ENCODE measurements at regions of chr2 and their contacts with region 1.

Region 1: DNA sequence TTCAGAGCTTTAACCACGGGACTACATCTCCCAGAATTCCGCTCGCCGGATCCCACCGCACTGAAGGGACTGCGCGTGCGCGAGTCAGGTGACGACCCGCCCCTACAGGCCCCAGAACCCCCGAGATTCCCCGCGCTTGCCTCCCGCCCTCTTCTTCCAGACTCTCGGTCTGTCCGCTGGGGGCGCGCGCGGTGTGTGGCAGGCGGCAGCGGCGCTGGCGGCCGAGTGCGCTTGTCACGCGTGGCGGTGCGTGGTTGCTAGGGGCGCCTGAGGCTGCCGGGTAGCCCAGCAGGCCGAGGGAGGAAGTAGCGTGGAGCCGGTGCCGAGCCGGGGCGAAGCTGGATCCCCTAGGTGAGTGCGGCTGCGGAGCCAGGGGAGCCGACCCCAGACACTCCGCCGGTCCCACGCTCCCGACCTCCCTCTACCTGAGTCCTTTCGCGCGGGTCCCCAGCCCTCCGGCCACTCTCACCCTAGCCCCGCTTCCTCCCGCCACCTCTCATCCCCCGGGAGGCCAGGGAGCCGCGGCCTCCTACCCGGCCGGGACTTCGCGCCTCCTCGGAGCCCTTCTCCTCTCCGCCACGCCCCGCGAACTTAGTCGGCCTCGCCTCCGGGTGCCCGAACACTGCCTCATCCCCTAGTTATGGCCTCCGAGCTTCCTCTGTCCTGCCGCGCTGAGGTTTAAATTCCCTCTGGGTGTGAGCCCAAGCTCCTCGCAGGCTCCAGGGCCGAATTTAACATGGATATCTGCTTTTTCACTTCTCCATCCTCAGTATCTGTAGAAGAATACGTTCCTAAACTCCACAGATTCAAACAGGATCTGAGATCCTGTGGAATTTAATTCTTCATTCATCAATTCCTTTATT is at the start of gene TTLL4:
- H3K4me3 Mint-ChIP-seq: peak within 1 kb of the TSS; percentile 84
- H3K27ac Mint-ChIP-seq: peak within 1 kb of the TSS; percentile 93
- H3K4me1 Mint-ChIP-seq: peaks cover 18% of the 10 kb centered on the region
- H3K27me3 Mint-ChIP-seq: peaks cover 4% of the 10 kb centered on the region

Region 2: GRCh38 chr2:218659258-218659987 is 51.5 kb before region 1 on chr2 and contains the starts of genes BCS1L and ZNF142:
- intact Hi-C with region 1: loop called (anchors 1 kb)
- H3K4me3 Mint-ChIP-seq: peak within 1 kb of the TSS; percentile 98
- H3K27ac Mint-ChIP-seq: peak within 1 kb of the TSS; percentile 82
- H3K4me1 Mint-ChIP-seq: peaks cover 31% of the 10 kb centered on the region
- H3K27me3 Mint-ChIP-seq: no peaks in the 10 kb centered on the region

Region 3: DNA sequence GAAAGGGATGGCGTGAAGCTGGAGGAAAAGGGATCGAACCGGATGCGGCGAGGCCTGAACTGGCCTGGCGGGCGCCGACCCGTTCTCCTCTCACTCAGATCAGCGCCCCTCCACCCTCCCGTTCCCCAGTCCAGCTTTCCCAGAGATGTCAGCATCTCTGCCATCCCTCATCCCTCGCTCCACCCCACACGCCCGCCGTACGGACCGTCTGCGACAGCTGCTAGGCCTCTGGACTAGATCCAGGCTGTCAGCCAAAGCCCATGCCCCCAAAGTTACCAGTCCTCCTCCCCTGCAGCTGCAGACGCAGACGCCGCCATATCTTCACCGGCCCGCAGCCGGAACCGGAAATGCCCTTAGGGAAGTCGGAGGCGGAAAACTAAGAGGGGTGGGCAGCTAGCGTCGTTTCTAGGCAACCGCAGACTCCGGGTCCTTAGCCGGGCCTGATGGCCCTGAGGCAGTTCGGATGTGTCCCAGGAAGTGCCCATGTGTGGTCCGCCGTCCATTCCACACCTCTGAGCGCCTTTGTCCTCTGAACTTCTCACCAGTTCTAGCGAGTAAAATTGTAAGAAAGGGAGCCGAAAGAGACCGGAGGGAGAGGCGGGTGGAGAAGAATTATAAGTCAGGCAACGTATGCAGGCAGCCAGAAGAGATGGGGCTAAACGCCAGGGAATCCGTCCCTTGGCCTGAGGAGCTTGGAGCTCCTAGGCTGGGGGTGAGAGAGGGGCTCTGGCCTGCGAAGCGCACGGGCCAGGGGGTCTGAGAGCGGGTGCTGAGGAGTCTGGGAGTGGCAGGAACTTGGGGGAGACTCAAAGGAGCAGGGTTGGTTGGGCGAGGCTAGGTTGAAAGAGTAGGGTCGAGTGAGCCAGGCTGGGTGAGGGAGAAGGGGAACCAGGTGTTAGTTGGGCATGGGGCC is 39.0 kb before region 1 on chr2 and contains the starts of genes RNF25 and STK36:
- intact Hi-C with region 1: loop called (anchors 2 kb)
- H3K4me3 Mint-ChIP-seq: peak within 1 kb of the TSS; percentile 95
- H3K27ac Mint-ChIP-seq: peak within 1 kb of the TSS; percentile 88
- H3K4me1 Mint-ChIP-seq: peaks cover 19% of the 10 kb centered on the region
- H3K27me3 Mint-ChIP-seq: no peaks in the 10 kb centered on the region

Region 4: GRCh38 chr2:218745559-218746469 is 34.9 kb after region 1 on chr2:
- intact Hi-C with region 1: loop called (anchors 2 kb)
- H3K4me3 Mint-ChIP-seq: no peak overlapping the region
- H3K27ac Mint-ChIP-seq: peak overlapping the region; percentile 76
- H3K4me1 Mint-ChIP-seq: peaks cover 63% of the 10 kb centered on the region
- H3K27me3 Mint-ChIP-seq: peaks cover 2% of the 10 kb centered on the region

Region 5: GRCh38 chr2:218773881-218774280 is 63.0 kb after region 1 on chr2:
- intact Hi-C with region 1: no loop called
- H3K4me3 Mint-ChIP-seq: no peak overlapping the region
- H3K27ac Mint-ChIP-seq: no peak overlapping the region
- H3K4me1 Mint-ChIP-seq: peaks cover 8% of the 10 kb centered on the region
- H3K27me3 Mint-ChIP-seq: peaks cover 2% of the 10 kb centered on the region

Region 6: DNA sequence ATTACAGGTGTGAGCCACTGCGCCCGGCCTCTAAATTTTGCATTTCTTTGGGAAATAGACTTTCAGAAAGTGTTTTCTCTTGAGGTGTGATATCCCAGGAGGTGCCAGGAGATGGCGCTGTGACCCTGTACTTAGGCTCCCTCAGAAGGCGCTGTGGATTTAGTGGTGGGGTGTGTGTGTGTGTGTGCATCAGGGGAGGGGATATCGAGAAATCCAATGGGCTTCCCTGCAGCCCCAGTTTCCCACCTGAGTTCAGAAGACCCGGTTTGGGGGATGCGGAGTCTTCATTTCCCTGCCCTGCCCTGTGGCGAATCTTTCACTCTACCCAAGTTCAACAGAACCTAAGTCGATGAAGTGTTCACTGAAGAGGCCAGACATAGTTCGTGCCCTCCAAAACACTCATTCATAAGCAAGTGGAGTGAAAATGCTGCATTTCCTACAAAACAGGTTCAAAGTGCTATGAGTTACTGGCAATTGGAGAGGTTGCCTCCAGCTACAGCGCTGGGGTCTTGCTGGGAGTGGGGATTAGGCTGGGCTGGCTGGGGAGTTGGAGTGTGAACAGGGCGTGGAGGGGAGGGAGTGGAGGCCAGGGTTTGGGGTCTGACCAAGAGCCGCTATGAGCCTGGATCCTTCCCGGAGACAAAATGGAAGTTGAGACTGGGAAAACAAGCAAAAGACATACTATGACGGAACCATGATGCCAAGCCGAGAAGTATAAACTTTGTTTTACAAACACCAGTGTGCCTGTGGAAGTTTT is 142.2 kb after region 1 on chr2:
- intact Hi-C with region 1: loop called (anchors 5 kb)
- H3K4me3 Mint-ChIP-seq: no peak overlapping the region
- H3K27ac Mint-ChIP-seq: no peak overlapping the region
- H3K4me1 Mint-ChIP-seq: peaks cover 17% of the 10 kb centered on the region
- H3K27me3 Mint-ChIP-seq: peaks cover 78% of the 10 kb centered on the region